ENCODE measurements at regions of chr3 and their contacts with region 1.

Region 1: DNA sequence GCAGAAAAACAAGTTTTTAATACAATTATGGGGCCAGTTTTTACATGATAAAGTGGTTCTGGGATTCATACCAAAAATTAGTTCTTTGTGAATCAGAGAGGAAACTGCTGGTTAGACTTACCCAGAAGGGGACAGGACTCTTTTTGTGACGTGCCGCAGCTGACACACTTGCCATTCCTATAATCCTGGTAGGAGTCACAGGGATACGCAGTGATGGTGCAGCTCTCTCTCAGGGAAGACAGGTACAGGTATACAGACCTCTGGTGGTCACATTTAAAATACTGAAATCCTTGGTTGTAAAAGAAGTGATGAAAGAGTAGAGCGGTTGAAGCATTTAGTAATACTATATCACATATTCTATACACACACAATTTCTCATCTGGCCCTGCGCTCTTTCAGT is 20.2 kb upstream of the TMEM41A start:
- DNase-seq: peak in 1 of 2 experiments; percentile 32
- H3K4me3 ChIP-seq: no peak overlapping the region
- H3K4me3 Mint-ChIP-seq: no peak overlapping the region
- H3K27ac Mint-ChIP-seq: no peak overlapping the region
- H3K4me1 ChIP-seq: no peaks in the 10 kb centered on the region
- H3K4me1 Mint-ChIP-seq: no peaks in the 10 kb centered on the region
- H3K27me3 ChIP-seq: no peaks in the 10 kb centered on the region
- H3K27me3 Mint-ChIP-seq: no peaks in the 10 kb centered on the region
- CTCF ChIP-seq: peak in 1 of 2 experiments; percentile 41

Region 2: DNA sequence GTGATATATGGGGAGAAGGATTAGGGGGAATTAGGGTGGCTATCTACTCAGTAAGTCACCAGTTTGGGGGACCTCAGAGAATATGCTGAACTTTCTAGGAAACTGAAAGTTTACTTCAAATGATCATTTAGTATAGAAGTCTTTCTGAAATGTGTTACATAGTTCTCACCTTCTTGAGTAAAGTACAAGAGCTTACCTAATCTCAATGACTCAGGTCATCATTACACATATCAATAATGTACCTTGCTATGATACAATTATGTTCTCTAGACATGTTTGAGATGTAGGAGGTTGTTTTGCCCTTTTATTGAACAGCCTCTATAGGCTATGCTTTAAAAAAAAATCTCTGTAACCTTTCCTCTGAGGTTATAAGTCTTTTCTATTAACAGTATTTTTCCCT is 70.9 kb before region 1 on chr3:
- CTCF ChIA-PET with region 1: no interaction called
- POLR2A ChIA-PET with region 1: no interaction called
- intact Hi-C with region 1: no loop called
- DNase-seq: no peak
- H3K4me3 ChIP-seq: no peak overlapping the region
- H3K4me3 Mint-ChIP-seq: no peak overlapping the region
- H3K27ac Mint-ChIP-seq: no peak overlapping the region
- H3K4me1 ChIP-seq: no peaks in the 10 kb centered on the region
- H3K4me1 Mint-ChIP-seq: no peaks in the 10 kb centered on the region
- H3K27me3 ChIP-seq: no peaks in the 10 kb centered on the region
- H3K27me3 Mint-ChIP-seq: no peaks in the 10 kb centered on the region
- CTCF ChIP-seq: no peak

Region 3: DNA sequence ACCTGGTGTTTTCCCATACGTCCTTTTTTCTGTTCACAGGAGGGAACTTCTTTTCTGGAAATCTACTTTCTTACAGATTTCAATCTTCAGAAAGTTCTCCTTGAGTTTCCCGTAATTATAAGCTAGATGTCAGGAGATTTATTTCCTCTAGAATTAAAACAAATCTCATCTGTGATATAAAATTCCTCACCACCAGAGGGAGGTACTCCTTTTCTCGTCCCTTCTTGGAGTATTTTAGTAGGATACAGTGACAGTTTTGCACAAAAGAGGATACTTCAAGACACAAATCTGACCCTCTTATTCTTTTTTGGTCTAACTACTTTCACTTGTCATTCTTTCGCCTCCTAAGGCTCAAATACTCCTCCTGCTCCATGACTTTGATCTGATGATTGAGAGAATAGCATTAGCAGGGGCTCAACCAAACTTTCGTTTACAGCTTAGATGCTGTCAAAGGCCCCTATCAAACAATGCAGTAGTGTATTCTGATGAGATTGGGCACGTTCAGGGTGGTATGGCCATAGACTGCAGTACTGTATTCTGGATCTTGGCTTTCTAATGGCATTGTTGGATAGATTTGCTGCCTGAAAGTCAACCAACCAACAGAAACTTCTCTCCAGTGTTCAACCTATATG is 58.2 kb before region 1 on chr3:
- CTCF ChIA-PET with region 1: interaction called, 7 read pairs
- POLR2A ChIA-PET with region 1: no interaction called
- intact Hi-C with region 1: loop called (anchors 1 kb)
- DNase-seq: peak in 1 of 2 experiments; percentile 34
- H3K4me3 ChIP-seq: no peak overlapping the region
- H3K4me3 Mint-ChIP-seq: no peak overlapping the region
- H3K27ac Mint-ChIP-seq: no peak overlapping the region
- H3K4me1 ChIP-seq: no peaks in the 10 kb centered on the region
- H3K4me1 Mint-ChIP-seq: no peaks in the 10 kb centered on the region
- H3K27me3 ChIP-seq: no peaks in the 10 kb centered on the region
- H3K27me3 Mint-ChIP-seq: no peaks in the 10 kb centered on the region
- CTCF ChIP-seq: peak; percentile 25 to 33

Measured in Caco-2 (cell line).